Tibial artery (tissue), 4 donors: ENCODE measurements at regions of chr3 and their contacts with region 1.

Region 1: GRCh38 chr3:155323063-155323666 is 29.7 kb upstream of the STRIT1 start:
- DNase-seq: no peak
- H3K4me3 ChIP-seq: no peak overlapping the region
- H3K27ac ChIP-seq: no peak overlapping the region
- H3K4me1 ChIP-seq: no peaks in the 10 kb centered on the region
- H3K27me3 ChIP-seq: no peaks in the 10 kb centered on the region
- CTCF ChIP-seq: peak; percentile 65 to 68

Region 2: GRCh38 chr3:154758109-154758868 is 564.9 kb before region 1 on chr3:
- intact Hi-C with region 1: loop called (anchors 10 kb)
- DNase-seq: no peak
- H3K4me3 ChIP-seq: no peak overlapping the region
- H3K27ac ChIP-seq: no peak overlapping the region
- H3K4me1 ChIP-seq: no peaks in the 10 kb centered on the region
- H3K27me3 ChIP-seq: no peaks in the 10 kb centered on the region
- CTCF ChIP-seq: peak; percentile 35 to 46